Esophagus muscularis mucosa (tissue), 4 donors: ENCODE measurements at regions of chr9 and their contacts with region 1.

Region 1: DNA sequence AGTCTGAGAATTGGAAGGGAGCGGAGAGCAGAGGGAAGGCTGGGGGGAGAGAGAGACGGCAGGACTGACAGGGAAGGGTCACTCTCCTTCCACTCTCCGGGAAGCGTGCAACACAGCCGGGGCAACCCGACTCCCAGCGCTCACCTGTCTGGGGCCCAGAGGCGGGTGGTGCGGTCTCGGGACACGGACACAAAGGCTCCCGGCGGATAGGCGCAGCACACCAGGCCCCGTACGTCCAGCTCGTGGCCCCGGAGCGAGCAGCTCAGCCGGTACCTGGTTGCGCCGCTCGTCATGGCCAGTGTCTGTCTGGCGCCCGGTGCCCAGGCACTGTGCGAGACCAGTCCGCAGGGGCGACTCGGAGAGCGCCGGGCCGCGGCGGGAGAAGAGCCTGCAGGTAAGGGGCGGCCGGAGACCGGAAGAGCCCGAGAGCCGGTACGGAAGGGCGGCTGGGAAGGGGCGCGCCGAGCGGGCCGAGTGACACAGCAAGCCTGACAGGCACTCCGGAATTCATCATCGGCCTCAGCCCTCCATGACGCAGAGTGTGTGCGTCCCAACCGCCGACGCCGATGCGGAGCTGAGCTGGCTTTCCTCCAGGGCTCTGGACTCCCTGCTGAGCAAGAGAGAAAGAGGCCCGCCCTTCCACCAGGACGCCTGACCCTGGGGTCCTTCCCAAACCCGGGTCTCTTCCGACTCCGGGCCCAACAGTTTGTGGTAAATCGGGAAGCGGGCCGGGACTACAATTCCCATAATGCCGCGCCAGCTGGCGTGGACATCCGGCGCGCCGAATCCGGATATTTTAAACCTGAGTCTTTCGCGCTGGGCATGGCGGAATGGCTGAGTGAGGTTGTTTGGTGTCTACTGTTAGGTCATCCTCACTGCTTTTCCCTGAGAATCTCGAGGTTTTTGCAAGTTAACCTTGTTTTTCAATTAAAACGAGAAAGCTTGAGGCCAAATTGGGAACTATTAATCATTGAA is at the start of gene PLAA:
- DNase-seq: peak; percentile 97
- H3K4me3 ChIP-seq: peak within 1 kb of the TSS; percentile 71 to 98 (median 88)
- H3K27ac ChIP-seq: peak within 1 kb of the TSS; percentile 93 to 98 (median 95)
- H3K4me1 ChIP-seq: peaks cover 25 to 43% (median 34%) of the 10 kb centered on the region in 4 donors
- H3K27me3 ChIP-seq: no peaks in the 10 kb centered on the region
- CTCF ChIP-seq: peak in 2 of 3 experiments; percentile 9 to 31
- EP300 ChIP-seq: no peak
- POLR2A ChIP-seq: peak; percentile 30
- total RNA-seq, gene PLAA: 22.4 to 32.3 (median 28.0) TPM

Region 2: GRCh38 chr9:26892251-26893029 is 54.6 kb before region 1 on chr9 and contains the start of gene CAAP1:
- intact Hi-C with region 1: loop called (anchors 5 kb)
- DNase-seq: peak; percentile 97
- H3K4me3 ChIP-seq: peak within 1 kb of the TSS; percentile 95 to 100 (median 98)
- H3K27ac ChIP-seq: peak within 1 kb of the TSS; percentile 98 to 100 (median 99)
- H3K4me1 ChIP-seq: peaks cover 16 to 41% (median 37%) of the 10 kb centered on the region in 4 donors
- H3K27me3 ChIP-seq: no peaks in the 10 kb centered on the region
- CTCF ChIP-seq: peak in 2 of 3 experiments; percentile 19 to 45
- EP300 ChIP-seq: no peak
- POLR2A ChIP-seq: peak; percentile 50
- total RNA-seq, gene CAAP1: 15.3 to 18.7 (median 16.2) TPM